Panc1 (cell line): ENCODE measurements at regions of chr14 and their contacts with region 1.

Region 1: DNA sequence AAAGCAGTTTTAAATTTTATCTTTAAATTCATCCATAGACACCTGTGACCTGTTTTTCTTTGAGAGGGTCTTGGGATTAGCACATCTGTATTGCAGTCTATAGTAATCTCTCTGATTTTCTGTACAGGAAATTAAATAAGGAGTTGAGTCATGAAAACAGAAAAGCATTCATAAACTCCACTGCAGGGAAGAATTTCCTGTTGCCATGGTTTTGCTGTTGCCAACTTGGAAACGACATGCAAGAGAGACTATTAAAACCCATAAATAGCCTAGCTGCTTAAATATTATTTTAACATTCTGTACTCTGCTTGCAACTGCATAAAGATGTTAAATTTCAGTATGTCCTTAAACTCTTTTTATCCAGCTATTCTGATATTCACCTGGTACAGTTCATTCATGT is 281.0 kb upstream of the RGS6 start:
- DNase-seq: no peak
- ATAC-seq: no peak
- H3K4me3 ChIP-seq: no peak overlapping the region
- H3K27ac ChIP-seq: no peak overlapping the region
- H3K4me1 ChIP-seq: no peaks in the 10 kb centered on the region
- H3K27me3 ChIP-seq: no peaks in the 10 kb centered on the region
- CTCF ChIP-seq: no peak

Region 2: GRCh38 chr14:70902184-70902583 is 749.0 kb before region 1 on chr14:
- CTCF ChIA-PET with region 1: interaction called, 11 read pairs
- POLR2A ChIA-PET with region 1: no interaction called
- in situ Hi-C with region 1: no loop called
- intact Hi-C with region 1: no loop called
- DNase-seq: no peak
- ATAC-seq: no peak
- H3K4me3 ChIP-seq: no peak overlapping the region
- H3K27ac ChIP-seq: no peak overlapping the region
- H3K4me1 ChIP-seq: peaks cover 3% of the 10 kb centered on the region; the same call in 1 of the 2 replicates
- H3K27me3 ChIP-seq: no peaks in the 10 kb centered on the region
- CTCF ChIP-seq: no peak

Region 3: GRCh38 chr14:71554959-71555612 is 96.1 kb before region 1 on chr14:
- CTCF ChIA-PET with region 1: no interaction called
- POLR2A ChIA-PET with region 1: no interaction called
- in situ Hi-C with region 1: no loop called
- intact Hi-C with region 1: no loop called
- DNase-seq: no peak
- ATAC-seq: no peak
- H3K4me3 ChIP-seq: no peak overlapping the region
- H3K27ac ChIP-seq: no peak overlapping the region
- H3K4me1 ChIP-seq: no peaks in the 10 kb centered on the region
- H3K27me3 ChIP-seq: no peaks in the 10 kb centered on the region
- CTCF ChIP-seq: no peak

Region 4: GRCh38 chr14:71597955-71598660 is 53.1 kb before region 1 on chr14:
- CTCF ChIA-PET with region 1: no interaction called
- POLR2A ChIA-PET with region 1: no interaction called
- in situ Hi-C with region 1: no loop called
- intact Hi-C with region 1: no loop called
- DNase-seq: no peak
- ATAC-seq: no peak
- H3K4me3 ChIP-seq: no peak overlapping the region
- H3K27ac ChIP-seq: no peak overlapping the region
- H3K4me1 ChIP-seq: no peaks in the 10 kb centered on the region
- H3K27me3 ChIP-seq: no peaks in the 10 kb centered on the region
- CTCF ChIP-seq: no peak

Region 5: GRCh38 chr14:71665157-71665556 is 13.9 kb after region 1 on chr14:
- CTCF ChIA-PET with region 1: no interaction called
- POLR2A ChIA-PET with region 1: no interaction called
- in situ Hi-C with region 1: no loop called
- intact Hi-C with region 1: no loop called
- DNase-seq: no peak
- ATAC-seq: no peak
- H3K4me3 ChIP-seq: no peak overlapping the region
- H3K27ac ChIP-seq: no peak overlapping the region
- H3K4me1 ChIP-seq: no peaks in the 10 kb centered on the region
- H3K27me3 ChIP-seq: no peaks in the 10 kb centered on the region
- CTCF ChIP-seq: no peak